B cell (primary cell): ENCODE measurements at regions of chr16 and their contacts with region 1.

Region 1: GRCh38 chr16:17289674-17290635 is 180.8 kb downstream of the XYLT1 start:
- DNase-seq: no peak
- ATAC-seq: no peak
- H3K4me3 ChIP-seq: no peak overlapping the region
- H3K4me3 Mint-ChIP-seq: no peak overlapping the region
- H3K27ac ChIP-seq: no peak overlapping the region
- H3K27ac Mint-ChIP-seq: no peak overlapping the region
- H3K4me1 ChIP-seq: peaks cover 4 to 7% of the 10 kb centered on the region in 2 donors
- H3K4me1 Mint-ChIP-seq: peaks cover 27% of the 10 kb centered on the region
- H3K27me3 ChIP-seq: no peaks in the 10 kb centered on the region
- H3K27me3 Mint-ChIP-seq: no peaks in the 10 kb centered on the region
- CTCF ChIP-seq: no peak

Region 2: GRCh38 chr16:17277977-17278381 is 12.0 kb before region 1 on chr16:
- CTCF ChIA-PET with region 1: interaction called, 18 read pairs
- POLR2A ChIA-PET with region 1: no interaction called
- intact Hi-C with region 1: no loop called
- DNase-seq: peak; percentile 69
- ATAC-seq: peak; percentile 60
- H3K4me3 ChIP-seq: peak overlapping the region in 1 of 5 experiments; percentile 20
- H3K4me3 Mint-ChIP-seq: peak overlapping the region; percentile 35
- H3K27ac ChIP-seq: no peak overlapping the region
- H3K27ac Mint-ChIP-seq: no peak overlapping the region
- H3K4me1 ChIP-seq: peaks cover 59 to 60% of the 10 kb centered on the region in 2 donors
- H3K4me1 Mint-ChIP-seq: peaks cover 77% of the 10 kb centered on the region
- H3K27me3 ChIP-seq: no peaks in the 10 kb centered on the region
- H3K27me3 Mint-ChIP-seq: no peaks in the 10 kb centered on the region
- CTCF ChIP-seq: peak; percentile 53